Activated T-helper 2 cell treated with anti-CD3 and anti-CD28 coated beads, Interferon-gamma antibody, Interleukin-2, Interleukin-4, amounts not matched to agents 10 μg/mL and 5 μg/mL and 100 μg/mL, durations not matched to agents 14 hours and 24 hours and 36 hours (primary cell): ENCODE measurements at regions of chr14 and their contacts with region 1.

Region 1: DNA sequence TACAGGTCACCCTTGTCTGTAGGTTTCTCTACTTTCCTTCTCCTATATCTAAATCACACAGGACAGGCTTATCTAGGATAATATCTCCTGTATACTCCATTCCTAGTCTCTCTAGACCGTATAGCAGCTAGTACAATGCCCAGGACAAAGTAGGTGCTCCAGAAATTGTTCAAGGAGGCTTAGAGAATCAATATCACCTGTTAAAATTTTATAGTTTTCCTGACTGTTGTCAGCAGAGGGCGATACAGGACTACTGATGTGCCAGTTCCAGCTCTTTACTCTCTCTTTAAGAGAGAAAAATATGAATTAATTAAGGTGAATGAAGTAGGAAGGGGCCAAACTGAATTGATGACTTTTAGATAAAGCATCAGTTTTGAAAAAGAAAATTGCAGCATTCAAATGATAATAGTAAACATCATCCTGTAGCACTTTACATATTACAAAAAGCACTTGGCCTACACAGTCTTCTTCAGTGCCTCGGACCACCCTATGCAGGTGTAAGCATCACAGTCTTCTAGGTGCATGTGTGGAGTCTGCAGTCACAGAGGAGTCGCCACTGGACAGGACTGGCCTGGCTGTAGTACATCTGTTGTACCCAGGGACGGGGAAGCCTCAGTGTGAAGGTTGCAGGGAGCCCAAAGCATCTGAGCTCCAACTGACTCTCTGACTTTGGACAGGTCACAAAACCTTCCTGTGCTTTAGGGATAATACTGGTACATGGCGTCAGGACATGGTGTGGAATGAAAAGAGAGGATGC is 61.9 kb upstream of the MAX start:
- DNase-seq: no peak
- H3K4me3 Mint-ChIP-seq: no peak overlapping the region
- H3K27ac Mint-ChIP-seq: no peak overlapping the region
- H3K4me1 Mint-ChIP-seq: peaks cover 31% of the 10 kb centered on the region
- H3K27me3 Mint-ChIP-seq: no peaks in the 10 kb centered on the region

Region 2: GRCh38 chr14:65102441-65103149 is 61.7 kb before region 1 on chr14 and contains the start of gene MAX:
- intact Hi-C with region 1: loop called (anchors 5 kb)
- DNase-seq: peak; percentile 99
- H3K4me3 Mint-ChIP-seq: peak within 1 kb of the TSS; percentile 92
- H3K27ac Mint-ChIP-seq: peak within 1 kb of the TSS; percentile 94
- H3K4me1 Mint-ChIP-seq: peaks cover 40% of the 10 kb centered on the region
- H3K27me3 Mint-ChIP-seq: peaks cover 6% of the 10 kb centered on the region
- total RNA-seq, gene MAX: 113 and 115 TPM in 2 replicates

Region 3: DNA sequence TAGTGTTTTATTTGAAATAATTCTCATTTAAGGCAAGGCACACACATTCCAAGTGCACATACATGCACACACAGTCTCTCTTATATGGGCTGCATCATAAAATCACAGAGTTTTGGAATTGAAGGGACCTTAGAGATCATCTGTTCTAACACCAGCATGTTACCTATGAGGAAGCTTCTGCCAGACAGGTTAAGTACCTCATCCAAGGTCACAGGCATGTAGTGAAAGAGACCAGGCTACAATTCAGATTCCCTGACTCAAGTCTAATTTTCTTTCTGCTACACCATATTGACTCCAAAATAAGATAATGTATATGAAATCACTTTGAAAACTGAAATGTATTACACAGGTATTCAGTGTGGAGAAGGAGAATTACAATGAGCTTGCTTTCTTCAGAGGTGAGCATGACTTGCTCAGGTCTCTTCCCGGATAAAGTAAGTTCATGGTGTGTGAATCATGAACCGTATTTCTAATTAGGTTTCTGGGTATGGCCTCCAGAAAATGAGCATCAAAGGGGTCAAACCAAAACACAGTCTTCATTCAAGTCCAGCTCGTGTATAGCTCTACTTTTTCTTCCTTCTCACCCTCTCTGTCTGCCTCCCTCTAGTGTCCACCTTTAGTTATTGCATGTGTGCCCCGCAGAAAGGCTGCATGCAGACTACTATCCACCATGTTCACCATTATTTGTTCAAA is 660.2 kb after region 1 on chr14:
- intact Hi-C with region 1: loop called (anchors 1 kb)
- DNase-seq: peak; percentile 52
- H3K4me3 Mint-ChIP-seq: no peak overlapping the region
- H3K27ac Mint-ChIP-seq: no peak overlapping the region
- H3K4me1 Mint-ChIP-seq: peaks cover 19% of the 10 kb centered on the region
- H3K27me3 Mint-ChIP-seq: peaks cover 12% of the 10 kb centered on the region

Region 4: GRCh38 chr14:65958664-65959562 is 794.7 kb after region 1 on chr14:
- intact Hi-C with region 1: loop called (anchors 5 kb)
- DNase-seq: no peak
- H3K4me3 Mint-ChIP-seq: no peak overlapping the region
- H3K27ac Mint-ChIP-seq: no peak overlapping the region
- H3K4me1 Mint-ChIP-seq: peaks cover 25% of the 10 kb centered on the region
- H3K27me3 Mint-ChIP-seq: peaks cover 15% of the 10 kb centered on the region

Region 5: GRCh38 chr14:66070509-66071319 is 906.5 kb after region 1 on chr14:
- intact Hi-C with region 1: loop called (anchors 5 kb)
- DNase-seq: peak; percentile 50
- H3K4me3 Mint-ChIP-seq: no peak overlapping the region
- H3K27ac Mint-ChIP-seq: no peak overlapping the region
- H3K4me1 Mint-ChIP-seq: peaks cover 7% of the 10 kb centered on the region
- H3K27me3 Mint-ChIP-seq: peaks cover 13% of the 10 kb centered on the region